HepG2 (cell line): ENCODE measurements at regions of chr15 and their contacts with region 1.

Region 1: DNA sequence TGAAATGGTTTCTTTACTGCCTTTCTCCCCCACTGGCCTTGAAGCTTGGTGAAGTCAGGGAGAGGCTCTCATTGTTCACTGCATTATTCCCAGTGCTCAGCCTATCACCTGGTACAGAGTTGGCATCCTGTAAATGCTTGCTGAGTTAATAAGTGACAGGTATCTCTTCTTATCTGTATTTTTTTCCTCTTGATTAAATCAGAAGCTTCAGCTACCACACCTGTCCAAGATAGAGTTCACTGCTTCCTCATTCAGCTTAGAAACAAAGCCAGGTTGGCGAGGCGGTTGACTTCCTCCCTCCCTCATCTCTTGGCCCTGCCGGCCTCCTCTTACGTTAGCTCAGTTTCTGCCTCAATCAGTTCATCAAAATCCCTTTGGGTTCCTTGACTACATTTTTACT is 142.8 kb downstream of the LIPC start:
- DNase-seq: peak; percentile 81
- ATAC-seq: peak; percentile 80
- H3K4me3 ChIP-seq: no peak overlapping the region
- H3K27ac ChIP-seq: no peak overlapping the region
- H3K4me1 ChIP-seq: peaks cover 31% of the 10 kb centered on the region
- H3K27me3 ChIP-seq: no peaks in the 10 kb centered on the region
- CTCF ChIP-seq: no peak
- EP300 ChIP-seq: no peak
- POLR2A ChIP-seq: no peak
- RAD21 ChIP-seq: no peak

Region 2: DNA sequence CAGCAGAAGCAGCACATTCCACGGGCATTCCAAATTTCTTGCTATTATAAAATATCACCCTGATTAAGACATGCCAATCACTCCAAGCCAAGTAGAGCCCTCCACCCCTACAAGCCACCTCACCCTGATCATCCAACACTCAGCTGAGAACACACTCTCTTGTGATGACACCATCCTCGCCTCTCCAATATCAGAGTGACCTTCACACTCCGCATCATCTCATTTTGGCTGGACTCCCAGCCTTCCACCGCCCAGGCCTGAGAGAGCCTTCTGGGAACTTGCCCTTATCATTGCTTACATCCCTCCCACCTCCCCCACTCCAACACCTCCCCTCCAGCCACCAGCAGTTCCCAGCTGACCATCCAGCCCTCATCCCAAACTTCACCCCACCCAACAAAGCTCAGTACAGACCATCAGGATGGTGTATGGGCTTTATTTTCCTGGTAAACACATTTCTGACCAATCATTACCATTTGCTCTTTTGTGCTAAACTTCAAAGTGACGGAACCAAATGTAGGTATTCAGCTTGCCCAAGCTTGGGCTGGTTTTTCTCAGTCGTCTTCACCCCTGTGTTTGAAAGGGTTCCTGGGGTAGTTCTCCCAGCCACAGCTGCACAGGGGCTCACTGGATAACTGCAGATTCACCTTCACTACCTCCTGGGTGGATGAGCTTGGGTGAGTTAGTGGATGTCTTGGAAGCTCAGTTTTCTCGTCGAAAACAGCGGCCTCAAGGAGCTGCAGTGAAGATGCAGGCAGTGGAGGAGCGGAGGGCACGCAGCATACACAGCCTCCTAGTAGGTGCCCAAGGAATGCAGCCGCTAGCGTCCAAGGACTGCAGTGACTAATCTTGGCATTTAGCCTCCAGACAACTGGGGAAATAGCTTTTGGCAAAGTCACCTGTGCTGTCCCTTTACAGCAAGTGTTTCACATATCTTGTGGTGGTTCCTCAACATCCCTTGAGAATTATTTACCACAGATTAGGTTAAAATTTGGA is 27.7 kb before region 1 on chr15:
- CTCF ChIA-PET with region 1: no interaction called
- POLR2A ChIA-PET with region 1: interaction called, 10 read pairs
- in situ Hi-C with region 1: no loop called
- intact Hi-C with region 1: loop called (anchors 2 kb)
- DNase-seq: peak; percentile 83
- ATAC-seq: peak; percentile 81
- H3K4me3 ChIP-seq: no peak overlapping the region
- H3K27ac ChIP-seq: peak overlapping the region; percentile 25
- H3K4me1 ChIP-seq: peaks cover 40% of the 10 kb centered on the region
- H3K27me3 ChIP-seq: no peaks in the 10 kb centered on the region
- CTCF ChIP-seq: no peak
- EP300 ChIP-seq: peak in 1 of 2 experiments; percentile 51; a peak in 1 of 4 replicates
- POLR2A ChIP-seq: no peak
- RAD21 ChIP-seq: no peak

Region 3: GRCh38 chr15:58551764-58552504 is 22.7 kb before region 1 on chr15:
- CTCF ChIA-PET with region 1: no interaction called
- POLR2A ChIA-PET with region 1: interaction called, 10 read pairs
- in situ Hi-C with region 1: no loop called
- intact Hi-C with region 1: loop called (anchors 2 kb)
- DNase-seq: peak; percentile 94
- ATAC-seq: peak; percentile 77
- H3K4me3 ChIP-seq: peak overlapping the region; percentile 7 to 59 (median 19)
- H3K27ac ChIP-seq: peak overlapping the region; percentile 74
- H3K4me1 ChIP-seq: peaks cover 41% of the 10 kb centered on the region
- H3K27me3 ChIP-seq: no peaks in the 10 kb centered on the region
- CTCF ChIP-seq: no peak
- EP300 ChIP-seq: peak in 1 of 2 experiments; percentile 64; a peak in 2 of 4 replicates
- POLR2A ChIP-seq: no peak
- RAD21 ChIP-seq: 0 out of 2 replicates have a peak, but pooled peaks have one; percentile 17

Region 4: DNA sequence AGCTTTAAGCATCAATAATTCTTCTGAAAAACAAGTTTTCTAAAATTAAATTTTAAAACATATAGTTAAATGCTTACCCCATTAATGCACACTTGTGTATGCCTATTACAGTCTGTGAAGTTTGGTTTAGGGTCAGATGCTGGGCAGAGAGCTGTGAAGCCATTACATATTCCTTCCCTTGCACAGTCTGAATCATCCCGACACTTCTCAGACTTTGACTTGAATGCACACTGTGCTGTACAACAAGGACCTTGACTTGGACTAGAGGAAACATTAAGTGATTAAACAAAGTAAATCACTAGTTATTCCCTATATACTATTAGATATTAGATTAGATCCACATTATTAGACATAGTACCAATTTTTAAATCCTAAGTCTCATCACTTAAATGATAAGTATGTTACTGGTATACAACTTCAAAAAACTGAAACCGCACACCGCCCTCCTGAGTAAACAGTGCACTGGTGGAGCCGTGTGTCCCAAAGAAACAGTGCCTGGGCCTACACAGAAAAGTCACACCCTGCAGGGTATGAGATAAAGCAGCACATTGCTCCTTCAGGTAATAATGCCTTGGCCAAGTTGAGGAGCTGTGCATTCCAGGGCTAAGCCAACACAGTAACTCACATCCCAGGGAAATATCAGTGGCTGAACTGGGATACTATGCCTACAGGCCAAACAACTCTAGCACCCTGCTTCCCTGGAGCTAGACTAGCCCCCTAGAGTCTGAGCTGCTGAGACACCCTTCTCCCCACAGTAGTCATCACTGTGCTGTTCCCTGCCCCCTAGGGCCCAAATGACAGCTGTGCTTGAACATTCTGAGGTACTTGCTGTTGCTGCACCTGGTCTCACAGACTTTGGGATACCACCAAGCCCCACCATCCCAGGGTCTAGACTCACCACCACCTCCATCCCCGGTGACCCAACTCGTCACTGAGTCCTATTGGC is 37.4 kb after region 1 on chr15:
- CTCF ChIA-PET with region 1: no interaction called
- POLR2A ChIA-PET with region 1: no interaction called
- in situ Hi-C with region 1: no loop called
- intact Hi-C with region 1: no loop called
- DNase-seq: no peak
- ATAC-seq: peak; percentile 57
- H3K4me3 ChIP-seq: no peak overlapping the region
- H3K27ac ChIP-seq: no peak overlapping the region
- H3K4me1 ChIP-seq: no peaks in the 10 kb centered on the region
- H3K27me3 ChIP-seq: no peaks in the 10 kb centered on the region
- CTCF ChIP-seq: no peak
- EP300 ChIP-seq: no peak
- POLR2A ChIP-seq: no peak
- RAD21 ChIP-seq: no peak